ENCODE measurements at regions of chr9 and their contacts with region 1.

Region 1: GRCh38 chr9:3732077-3733038 is 206.6 kb upstream of the RFX3 start:
- H3K4me3 Mint-ChIP-seq: no peak overlapping the region
- H3K27ac Mint-ChIP-seq: no peak overlapping the region
- H3K4me1 Mint-ChIP-seq: peaks cover 14% of the 10 kb centered on the region
- H3K27me3 Mint-ChIP-seq: no peaks in the 10 kb centered on the region

Region 2: GRCh38 chr9:2919347-2919746 is 813.0 kb before region 1 on chr9:
- intact Hi-C with region 1: no loop called
- H3K4me3 Mint-ChIP-seq: no peak overlapping the region
- H3K27ac Mint-ChIP-seq: no peak overlapping the region
- H3K4me1 Mint-ChIP-seq: no peaks in the 10 kb centered on the region
- H3K27me3 Mint-ChIP-seq: no peaks in the 10 kb centered on the region

Region 3: GRCh38 chr9:3751125-3751758 is 18.9 kb after region 1 on chr9:
- intact Hi-C with region 1: no loop called
- H3K4me3 Mint-ChIP-seq: no peak overlapping the region
- H3K27ac Mint-ChIP-seq: no peak overlapping the region
- H3K4me1 Mint-ChIP-seq: peaks cover 4% of the 10 kb centered on the region
- H3K27me3 Mint-ChIP-seq: no peaks in the 10 kb centered on the region

Region 4: DNA sequence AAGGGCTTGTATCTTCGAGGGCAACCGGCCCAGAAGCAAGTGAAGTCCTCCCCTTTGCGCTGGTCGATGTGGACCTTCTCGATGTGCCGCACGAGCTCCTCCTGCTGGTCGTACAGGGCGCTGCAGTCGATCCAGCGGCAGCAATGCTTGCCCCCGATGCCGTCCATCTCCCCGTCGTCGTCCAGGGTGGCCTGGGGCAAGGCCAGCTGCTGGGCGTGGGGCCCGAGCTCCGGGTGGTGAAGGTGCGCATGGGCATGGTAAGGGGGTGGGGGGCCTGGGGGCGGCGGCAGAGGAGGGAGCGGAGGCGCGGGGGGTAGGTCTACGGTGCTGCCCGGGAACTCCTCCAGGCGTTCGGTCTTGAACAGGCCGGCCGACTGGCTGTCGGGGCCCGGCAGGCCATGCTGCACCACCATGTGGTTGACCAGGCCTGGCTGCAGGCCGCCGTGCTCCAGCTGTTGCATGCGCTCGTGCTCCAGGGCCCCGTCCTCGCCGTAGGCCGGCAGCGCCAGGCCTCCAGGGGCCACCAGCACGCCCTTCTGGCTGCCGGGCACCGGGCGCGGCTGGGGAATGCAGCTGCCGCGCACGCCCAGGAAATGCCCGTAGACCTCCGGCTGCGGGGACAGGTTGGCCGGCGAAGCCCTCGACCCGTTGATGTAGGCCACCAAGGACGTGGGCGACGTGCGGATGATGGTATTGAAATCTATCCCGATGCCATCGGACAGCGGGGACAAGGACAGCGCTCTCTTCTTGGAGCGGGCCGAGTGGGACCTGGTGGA is 385.7 kb after region 1 on chr9:
- intact Hi-C with region 1: loop called (anchors 1 kb)
- H3K4me3 Mint-ChIP-seq: no peak overlapping the region
- H3K27ac Mint-ChIP-seq: no peak overlapping the region
- H3K4me1 Mint-ChIP-seq: no peaks in the 10 kb centered on the region
- H3K27me3 Mint-ChIP-seq: no peaks in the 10 kb centered on the region

Region 5: GRCh38 chr9:4228606-4229005 is 496.2 kb after region 1 on chr9:
- intact Hi-C with region 1: loop called (anchors 5 kb)
- H3K4me3 Mint-ChIP-seq: no peak overlapping the region
- H3K27ac Mint-ChIP-seq: no peak overlapping the region
- H3K4me1 Mint-ChIP-seq: peaks cover 20% of the 10 kb centered on the region
- H3K27me3 Mint-ChIP-seq: no peaks in the 10 kb centered on the region

Region 6: DNA sequence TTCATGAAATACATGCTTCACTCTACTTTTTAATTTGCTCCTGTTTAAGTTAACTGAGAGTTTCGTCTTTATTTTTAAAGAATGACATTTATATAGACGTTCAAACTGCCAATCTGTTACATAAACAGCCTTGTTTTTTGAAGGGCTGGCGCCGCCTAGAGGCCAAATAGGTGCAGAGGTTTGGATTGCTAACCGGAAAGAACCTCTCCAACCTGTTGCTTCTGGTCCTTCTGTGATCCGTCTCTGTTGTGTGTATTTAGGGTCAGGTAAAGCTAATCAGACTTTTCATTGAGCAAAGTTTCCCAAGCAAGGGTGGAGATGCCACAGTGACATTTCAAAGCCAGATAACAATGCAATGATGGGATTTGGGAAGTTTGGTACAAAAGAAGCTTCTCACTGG is 607.0 kb after region 1 on chr9:
- intact Hi-C with region 1: loop called (anchors 1 kb)
- H3K4me3 Mint-ChIP-seq: no peak overlapping the region
- H3K27ac Mint-ChIP-seq: no peak overlapping the region
- H3K4me1 Mint-ChIP-seq: no peaks in the 10 kb centered on the region
- H3K27me3 Mint-ChIP-seq: no peaks in the 10 kb centered on the region

Region 7: GRCh38 chr9:4366591-4367330 is 634.4 kb after region 1 on chr9:
- intact Hi-C with region 1: loop called (anchors 2 kb)
- H3K4me3 Mint-ChIP-seq: no peak overlapping the region
- H3K27ac Mint-ChIP-seq: no peak overlapping the region
- H3K4me1 Mint-ChIP-seq: no peaks in the 10 kb centered on the region
- H3K27me3 Mint-ChIP-seq: no peaks in the 10 kb centered on the region